Left cardiac atrium (tissue), 4 donors: ENCODE measurements at regions of chr1 and their contacts with region 1.

Region 1: GRCh38 chr1:94854458-94855306 is 34.5 kb downstream of the SLC44A3 start:
- DNase-seq: peak; percentile 88
- ATAC-seq: peak; percentile 92 to 95

Region 2: DNA sequence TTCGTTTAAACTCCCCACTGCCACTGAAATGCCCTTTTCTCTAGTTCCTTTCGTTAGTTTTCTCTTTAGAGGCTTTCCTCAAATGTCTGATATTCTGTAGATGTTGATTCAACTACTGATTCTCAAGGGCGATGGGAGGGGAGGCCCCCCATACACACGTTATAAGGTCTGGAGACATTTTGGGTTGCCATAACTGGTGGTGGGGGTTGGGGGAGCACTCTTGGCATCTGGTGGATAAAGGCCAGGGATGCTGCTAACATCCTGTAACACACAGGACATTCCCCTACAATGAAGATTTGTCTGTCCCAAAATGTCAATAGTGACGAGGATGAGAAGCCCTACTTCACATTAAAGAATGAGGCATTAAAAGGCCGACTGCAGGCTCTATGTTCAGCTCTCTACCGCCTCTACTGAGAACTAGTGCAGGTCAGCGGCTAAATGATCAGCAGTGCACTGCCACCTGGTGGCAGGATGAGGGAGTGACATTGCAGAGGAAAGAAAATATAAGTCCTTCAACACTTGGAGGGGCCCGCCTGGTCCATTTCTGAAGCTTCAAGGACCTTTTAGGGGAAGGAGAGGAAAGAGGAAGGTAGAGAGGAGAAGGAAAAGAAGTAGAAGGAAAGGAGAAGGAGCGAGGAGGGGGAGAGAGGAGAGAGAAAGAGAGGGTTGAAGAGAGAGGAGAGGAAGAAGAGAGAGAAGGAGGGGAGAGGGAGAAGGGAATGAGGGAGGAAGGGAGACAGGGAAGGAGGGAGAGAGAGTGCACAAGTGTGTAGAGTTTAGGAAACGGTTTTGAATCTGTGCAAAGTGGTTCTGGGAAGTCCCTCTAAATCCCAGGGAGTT is 188.7 kb after region 1 on chr1:
- intact Hi-C with region 1: loop called (anchors 1 to 5 kb)
- DNase-seq: peak; percentile 78
- ATAC-seq: peak; percentile 84 to 89